ENCODE measurements at regions of chr17 and their contacts with region 1.

Region 1: GRCh38 chr17:67139784-67140657 is 95.7 kb downstream of the CACNG1 start:
- ATAC-seq: peak in 1 of 8 experiments; percentile 65
- H3K4me3 ChIP-seq: no peak overlapping the region
- H3K27ac ChIP-seq: no peak overlapping the region
- H3K4me1 ChIP-seq: no peaks in the 10 kb centered on the region

Region 2: DNA sequence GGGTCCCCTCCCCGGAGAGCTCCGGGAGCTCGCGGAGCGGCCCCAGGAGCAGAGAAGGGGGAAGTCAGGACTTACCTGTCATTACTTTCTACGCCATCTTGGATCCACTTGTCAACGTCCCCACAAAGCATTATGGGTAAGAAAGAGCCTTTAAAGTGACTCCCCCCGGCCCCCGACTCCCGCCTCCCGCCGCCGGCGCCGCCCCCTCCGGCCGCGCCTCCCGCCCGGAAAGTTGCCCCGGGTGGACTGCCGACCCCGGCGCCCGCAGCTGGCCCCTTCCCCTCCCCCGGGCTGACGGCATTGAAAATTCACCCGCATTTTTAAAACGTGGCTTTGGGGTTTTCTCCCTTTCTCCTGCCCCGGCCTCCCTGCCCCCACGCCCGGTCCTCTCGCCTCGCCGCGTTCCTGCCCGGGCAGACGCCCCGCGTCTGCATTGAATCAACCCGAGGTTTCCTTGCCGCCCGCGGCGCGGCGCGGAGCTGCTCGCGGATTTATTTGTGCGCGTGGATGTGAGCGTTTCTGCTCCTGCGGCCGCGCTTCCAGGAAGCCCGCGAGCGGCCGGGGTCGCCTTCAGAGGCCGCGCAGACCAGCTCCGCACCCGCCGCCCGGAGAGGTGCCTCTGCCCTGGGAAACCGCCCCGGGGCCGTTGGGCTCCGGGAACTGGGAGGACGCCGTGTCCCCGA is 105.2 kb after region 1 on chr17 and contains the start of gene HELZ:
- in situ Hi-C with region 1: loop called in 1 of 9 experiments (anchors 25 kb)
- ATAC-seq: peak; percentile 54 to 70 (median 64)
- H3K4me3 ChIP-seq: peak within 1 kb of the TSS; percentile 94 to 98 (median 96)
- H3K27ac ChIP-seq: peak within 1 kb of the TSS; percentile 73 to 95
- H3K4me1 ChIP-seq: peaks cover 10 to 12% of the 10 kb centered on the region in 2 donors
- total RNA-seq, gene HELZ: 22.0 to 106 (median 27.4) TPM